ENCODE measurements at regions of chr2 and their contacts with region 1.

Region 1: DNA sequence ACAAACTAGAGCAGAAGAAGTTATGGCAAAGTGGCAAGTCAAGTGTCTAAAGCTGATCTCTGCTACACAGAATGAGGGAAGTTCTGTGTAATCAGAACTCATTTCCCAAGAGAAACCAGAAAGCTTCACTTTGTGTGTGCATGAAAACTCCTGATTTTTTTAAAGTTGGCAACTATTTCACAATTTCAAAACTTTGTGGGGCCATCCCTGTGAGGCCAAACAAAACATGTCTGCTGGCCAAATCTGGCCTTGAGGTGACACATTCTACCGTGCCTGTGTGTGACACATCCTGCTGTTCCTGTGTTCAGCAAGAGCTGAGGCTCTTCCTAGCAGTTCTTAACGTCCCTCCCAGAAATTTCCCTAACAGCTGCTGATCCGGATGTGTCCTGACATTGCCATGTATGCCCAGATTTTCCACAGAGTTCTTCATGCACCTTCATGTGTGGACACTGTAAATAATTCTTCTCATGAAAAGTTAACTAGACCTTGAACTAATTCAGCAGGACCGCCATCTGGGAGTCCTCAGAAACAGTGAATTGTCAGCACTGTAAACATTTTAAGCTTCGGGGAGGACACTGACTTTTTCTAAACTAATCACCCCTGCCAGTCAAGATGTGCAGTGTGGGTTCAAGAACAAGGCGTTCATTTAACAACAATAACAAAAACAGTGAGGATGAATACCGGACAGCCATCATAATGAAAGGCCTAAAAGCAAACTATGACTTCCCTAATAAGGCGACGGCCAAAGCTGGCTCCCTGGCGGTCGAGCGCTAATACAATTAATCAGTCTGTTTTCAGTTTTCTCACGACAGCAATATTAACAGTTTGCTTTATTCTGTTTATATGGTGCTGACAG is 99.0 kb downstream of the PLEKHM3 start:
- DNase-seq: no peak

Region 2: GRCh38 chr2:208274748-208275147 is 348.4 kb after region 1 on chr2:
- intact Hi-C with region 1: loop called (anchors 10 kb)
- DNase-seq: no peak

Measured in posterior cingulate gyrus (tissue), 11 donors.